Prostate gland (tissue), 2 donors: ENCODE measurements at regions of chr7 and their contacts with region 1.

Region 1: GRCh38 chr7:154903083-154903731 is 99.7 kb downstream of the PAXIP1 start:
- DNase-seq: no peak
- H3K4me3 ChIP-seq: no peak overlapping the region
- H3K27ac ChIP-seq: no peak overlapping the region
- H3K4me1 ChIP-seq: no peaks in the 10 kb centered on the region
- H3K27me3 ChIP-seq: no peaks in the 10 kb centered on the region
- CTCF ChIP-seq: no peak
- POLR2A ChIP-seq: no peak

Region 2: DNA sequence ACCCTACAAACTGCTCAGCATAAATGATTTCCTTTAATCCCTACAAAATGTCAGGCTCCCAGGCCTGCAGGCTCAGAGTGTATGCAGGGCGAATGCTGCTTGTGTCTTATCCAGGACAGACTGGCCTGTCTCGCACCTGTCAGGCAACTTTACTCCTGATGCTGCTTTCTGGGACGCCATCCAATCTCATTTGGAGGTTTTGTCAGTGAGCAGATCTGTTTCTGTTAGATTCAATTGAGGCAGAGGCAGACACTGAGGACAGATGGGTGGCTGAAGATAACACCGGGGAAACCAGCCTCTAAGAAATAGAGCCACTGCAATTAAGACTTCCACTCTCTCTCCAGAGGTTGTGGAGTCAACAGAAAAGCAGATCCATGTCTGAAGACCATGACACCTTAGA is 735.4 kb before region 1 on chr7:
- intact Hi-C with region 1: no loop called
- DNase-seq: no peak
- H3K4me3 ChIP-seq: no peak overlapping the region
- H3K27ac ChIP-seq: no peak overlapping the region
- H3K4me1 ChIP-seq: no peaks in the 10 kb centered on the region
- H3K27me3 ChIP-seq: no peaks in the 10 kb centered on the region
- CTCF ChIP-seq: no peak
- POLR2A ChIP-seq: no peak

Region 3: GRCh38 chr7:155543011-155543876 is 640.0 kb after region 1 on chr7:
- intact Hi-C with region 1: loop called (anchors 5 kb)
- DNase-seq: no peak
- H3K4me3 ChIP-seq: no peak overlapping the region
- H3K27ac ChIP-seq: no peak overlapping the region
- H3K4me1 ChIP-seq: no peaks in the 10 kb centered on the region
- H3K27me3 ChIP-seq: peaks cover 9% of the 10 kb centered on the region
- CTCF ChIP-seq: no peak
- POLR2A ChIP-seq: no peak